Activated CD4-positive, alpha-beta T cell treated with anti-CD3 and anti-CD28 coated beads, Interleukin-2, amount 10 ng/mL, durations not matched to agents 24 days and 14 days (primary cell): ENCODE measurements at regions of chr10 and their contacts with region 1.

Region 1: GRCh38 chr10:23314835-23315239 is 29.8 kb downstream of the C10orf67 start:
- DNase-seq: peak; percentile 88
- H3K4me3 Mint-ChIP-seq: no peak overlapping the region
- H3K27ac Mint-ChIP-seq: no peak overlapping the region
- H3K4me1 Mint-ChIP-seq: peaks cover 2% of the 10 kb centered on the region
- H3K27me3 Mint-ChIP-seq: peaks cover 2% of the 10 kb centered on the region

Region 2: DNA sequence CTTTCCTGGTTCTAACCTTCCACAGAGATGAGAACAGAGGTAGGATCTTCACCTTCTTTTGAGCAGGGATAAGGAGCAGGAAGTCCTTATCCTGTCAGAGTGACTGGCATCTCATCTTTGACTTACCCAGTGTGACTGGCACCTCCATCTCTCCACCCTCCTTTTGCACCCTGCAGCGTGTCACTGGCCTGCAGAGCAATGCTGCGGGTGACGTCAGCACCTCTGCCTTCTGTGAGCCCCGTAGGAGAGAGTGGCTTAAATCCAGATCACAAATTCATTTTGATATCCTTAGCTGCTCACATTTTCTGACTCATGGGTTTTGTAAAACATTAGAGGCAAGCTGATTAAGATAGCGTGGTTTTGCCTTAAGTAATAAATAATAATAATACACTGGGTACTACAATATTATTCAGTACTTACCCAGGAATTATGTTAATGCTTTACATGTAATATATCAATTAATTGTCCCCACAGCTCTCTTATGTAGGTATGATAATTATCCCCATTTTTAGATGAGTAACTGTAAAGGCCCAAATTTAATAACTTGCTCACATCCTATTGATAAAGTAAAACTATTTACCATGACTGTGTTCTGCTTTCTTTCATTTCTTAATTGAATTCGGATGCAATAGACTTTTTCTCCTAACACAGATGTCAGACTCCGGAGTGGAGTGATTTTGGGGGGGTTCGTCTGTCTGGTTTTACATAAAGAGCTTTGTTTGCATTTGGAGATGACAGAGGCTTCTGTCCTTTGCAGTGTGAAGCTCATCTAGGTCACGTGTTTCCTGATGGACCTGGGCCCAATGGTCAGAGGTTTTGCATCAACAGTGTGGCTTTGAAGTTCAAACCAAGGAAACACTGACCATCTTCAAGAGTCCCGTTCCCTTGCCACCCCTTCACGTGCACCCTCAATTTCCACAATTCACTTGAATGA is 194.6 kb before region 1 on chr10:
- intact Hi-C with region 1: no loop called
- DNase-seq: no peak
- H3K4me3 Mint-ChIP-seq: no peak overlapping the region
- H3K27ac Mint-ChIP-seq: no peak overlapping the region
- H3K4me1 Mint-ChIP-seq: no peaks in the 10 kb centered on the region
- H3K27me3 Mint-ChIP-seq: no peaks in the 10 kb centered on the region

Region 3: GRCh38 chr10:23293145-23293724 is 21.6 kb before region 1 on chr10:
- intact Hi-C with region 1: no loop called
- DNase-seq: peak; percentile 81
- H3K4me3 Mint-ChIP-seq: no peak overlapping the region
- H3K27ac Mint-ChIP-seq: no peak overlapping the region
- H3K4me1 Mint-ChIP-seq: no peaks in the 10 kb centered on the region
- H3K27me3 Mint-ChIP-seq: peaks cover 17% of the 10 kb centered on the region

Region 4: GRCh38 chr10:23530079-23530478 is 215.2 kb after region 1 on chr10:
- intact Hi-C with region 1: loop called (anchors 1 kb)
- DNase-seq: no peak
- H3K4me3 Mint-ChIP-seq: no peak overlapping the region
- H3K27ac Mint-ChIP-seq: no peak overlapping the region
- H3K4me1 Mint-ChIP-seq: peaks cover 14% of the 10 kb centered on the region
- H3K27me3 Mint-ChIP-seq: no peaks in the 10 kb centered on the region

Region 5: GRCh38 chr10:23556727-23557440 is 242.0 kb after region 1 on chr10:
- intact Hi-C with region 1: no loop called
- DNase-seq: no peak
- H3K4me3 Mint-ChIP-seq: no peak overlapping the region
- H3K27ac Mint-ChIP-seq: peak overlapping the region; percentile 45
- H3K4me1 Mint-ChIP-seq: peaks cover 8% of the 10 kb centered on the region
- H3K27me3 Mint-ChIP-seq: no peaks in the 10 kb centered on the region

Region 6: GRCh38 chr10:23656735-23657134 is 341.9 kb after region 1 on chr10:
- intact Hi-C with region 1: loop called (anchors 5 kb)
- DNase-seq: no peak
- H3K4me3 Mint-ChIP-seq: no peak overlapping the region
- H3K27ac Mint-ChIP-seq: no peak overlapping the region
- H3K4me1 Mint-ChIP-seq: no peaks in the 10 kb centered on the region
- H3K27me3 Mint-ChIP-seq: no peaks in the 10 kb centered on the region

Region 7: DNA sequence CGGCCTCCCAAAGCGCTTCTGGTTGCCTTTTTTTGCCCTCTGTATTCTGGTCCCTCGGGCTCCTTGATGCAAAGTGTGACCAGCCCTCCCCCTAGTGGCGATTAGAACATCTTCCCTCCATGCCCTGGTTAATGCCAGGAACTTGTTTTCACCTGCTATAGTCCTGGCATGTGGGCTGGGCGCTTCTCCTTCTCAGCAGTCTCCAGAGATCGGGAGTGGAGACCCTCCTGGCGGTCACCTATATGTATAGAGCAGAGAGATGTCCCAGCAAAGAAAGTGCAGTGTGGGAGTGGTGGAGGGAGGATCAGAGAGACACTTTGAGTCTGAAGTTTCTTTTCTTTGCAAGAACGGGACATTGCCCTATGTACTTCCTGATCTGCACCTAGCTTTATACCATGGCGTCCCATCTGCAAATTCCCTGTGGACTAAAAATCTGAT is 388.2 kb after region 1 on chr10:
- intact Hi-C with region 1: loop called (anchors 1 kb)
- DNase-seq: peak; percentile 85
- H3K4me3 Mint-ChIP-seq: no peak overlapping the region
- H3K27ac Mint-ChIP-seq: no peak overlapping the region
- H3K4me1 Mint-ChIP-seq: peaks cover 2% of the 10 kb centered on the region
- H3K27me3 Mint-ChIP-seq: peaks cover 18% of the 10 kb centered on the region

Region 8: GRCh38 chr10:23886355-23886754 is 571.5 kb after region 1 on chr10:
- intact Hi-C with region 1: no loop called
- DNase-seq: no peak
- H3K4me3 Mint-ChIP-seq: no peak overlapping the region
- H3K27ac Mint-ChIP-seq: no peak overlapping the region
- H3K4me1 Mint-ChIP-seq: no peaks in the 10 kb centered on the region
- H3K27me3 Mint-ChIP-seq: no peaks in the 10 kb centered on the region

Region 9: GRCh38 chr10:24201503-24202180 is 886.8 kb after region 1 on chr10:
- intact Hi-C with region 1: loop called (anchors 10 kb)
- DNase-seq: no peak
- H3K4me3 Mint-ChIP-seq: no peak overlapping the region
- H3K27ac Mint-ChIP-seq: no peak overlapping the region
- H3K4me1 Mint-ChIP-seq: peaks cover 9% of the 10 kb centered on the region
- H3K27me3 Mint-ChIP-seq: peaks cover 14% of the 10 kb centered on the region